Naive thymus-derived CD8-positive, alpha-beta T cell (primary cell): ENCODE measurements at regions of chr17 and their contacts with region 1.

Region 1: DNA sequence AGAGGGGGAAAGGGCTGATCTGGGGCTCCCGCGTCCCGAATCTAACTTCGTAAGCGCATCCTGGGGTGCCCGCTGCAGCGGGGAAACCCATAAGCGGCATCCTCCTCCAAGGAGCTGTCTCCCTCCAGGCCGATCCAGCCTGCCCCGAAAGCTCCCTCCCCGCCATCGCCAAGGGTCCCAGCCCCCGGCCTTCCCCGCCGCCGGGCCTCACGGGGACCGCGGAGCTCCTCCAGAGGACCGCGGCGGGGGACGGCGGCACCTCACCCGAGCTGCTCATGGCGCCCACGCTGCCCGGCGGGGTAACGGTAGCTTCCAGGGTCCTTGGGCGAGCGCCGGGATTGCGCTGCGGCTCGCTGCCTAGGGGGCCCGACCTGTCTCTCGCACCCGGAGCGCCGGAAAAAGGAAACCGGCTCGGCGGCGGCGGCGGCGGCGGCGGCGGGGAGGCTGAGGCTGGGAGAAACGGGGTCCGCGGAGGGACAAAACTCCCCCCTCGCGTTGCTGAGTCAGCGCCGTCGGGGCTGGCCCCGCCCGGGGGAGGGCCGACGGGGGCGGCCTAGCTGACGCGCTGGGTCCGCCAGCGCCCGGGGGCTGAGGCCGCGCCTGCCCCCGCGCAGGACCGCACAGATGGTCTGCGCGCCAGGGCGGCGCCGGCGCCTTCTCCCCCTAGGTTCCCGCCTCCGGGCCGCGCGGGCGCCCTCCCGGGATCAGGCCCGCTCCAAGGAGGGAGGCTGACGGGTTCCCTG is at the start of gene BLMH:
- DNase-seq: peak; percentile 65 to 85 (median 75)
- ATAC-seq: peak; percentile 78 to 89
- H3K4me3 Mint-ChIP-seq: peak within 1 kb of the TSS in 9 of 10 donors; percentile 90 to 97 (median 95)
- H3K27ac Mint-ChIP-seq: peak within 1 kb of the TSS; percentile 36 to 92 (median 87)
- H3K4me1 Mint-ChIP-seq: peaks cover 9 to 25% (median 19%) of the 10 kb centered on the region in 4 donors
- H3K27me3 Mint-ChIP-seq: no peaks in the 10 kb centered on the region
- polyA plus RNA-seq, gene BLMH: 17.6 to 28.3 (median 25.4) TPM

Region 2: DNA sequence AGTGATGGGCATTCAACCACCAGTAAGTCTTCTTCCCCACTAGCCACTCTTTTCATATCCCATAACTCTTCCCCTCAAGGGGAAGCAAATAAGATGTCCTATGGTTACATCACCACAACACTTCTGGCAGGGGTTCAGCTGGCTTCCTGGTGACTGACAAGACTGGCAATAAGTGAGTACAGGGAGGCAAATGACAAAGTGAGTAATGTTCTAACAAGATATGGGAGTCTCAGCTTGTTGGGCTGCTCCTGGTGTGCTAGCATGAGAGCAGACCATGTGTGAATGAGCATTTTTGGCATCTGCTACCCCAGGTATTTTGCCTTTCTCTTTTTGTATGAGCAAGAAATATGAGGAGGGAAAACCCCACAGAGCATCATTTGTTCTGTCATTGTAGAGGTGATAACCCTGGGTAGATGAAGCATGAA is 32.2 kb after region 1 on chr17:
- POLR2A ChIA-PET with region 1: interaction called, 17 read pairs
- DNase-seq: peak in 3 of 10 donors; percentile 7 to 13 (median 8)
- ATAC-seq: peak; percentile 54 to 56
- H3K4me3 Mint-ChIP-seq: peak overlapping the region in 9 of 10 donors; percentile 26 to 67 (median 55)
- H3K27ac Mint-ChIP-seq: peak overlapping the region; percentile 38 to 95 (median 90)
- H3K4me1 Mint-ChIP-seq: peaks cover 11 to 32% (median 22%) of the 10 kb centered on the region in 4 donors
- H3K27me3 Mint-ChIP-seq: peaks cover 0 to 1% (median 0%) of the 10 kb centered on the region in 5 donors

Region 3: GRCh38 chr17:30336369-30337171 is 44.9 kb after region 1 on chr17:
- POLR2A ChIA-PET with region 1: interaction called, 17 read pairs
- DNase-seq: peak; percentile 39 to 82 (median 58)
- ATAC-seq: peak; percentile 45 to 46
- H3K4me3 Mint-ChIP-seq: no peak overlapping the region
- H3K27ac Mint-ChIP-seq: peak overlapping the region in 1 of 10 donors; percentile 27
- H3K4me1 Mint-ChIP-seq: peaks cover 16 to 35% (median 33%) of the 10 kb centered on the region in 4 donors
- H3K27me3 Mint-ChIP-seq: no peaks in the 10 kb centered on the region

Region 4: DNA sequence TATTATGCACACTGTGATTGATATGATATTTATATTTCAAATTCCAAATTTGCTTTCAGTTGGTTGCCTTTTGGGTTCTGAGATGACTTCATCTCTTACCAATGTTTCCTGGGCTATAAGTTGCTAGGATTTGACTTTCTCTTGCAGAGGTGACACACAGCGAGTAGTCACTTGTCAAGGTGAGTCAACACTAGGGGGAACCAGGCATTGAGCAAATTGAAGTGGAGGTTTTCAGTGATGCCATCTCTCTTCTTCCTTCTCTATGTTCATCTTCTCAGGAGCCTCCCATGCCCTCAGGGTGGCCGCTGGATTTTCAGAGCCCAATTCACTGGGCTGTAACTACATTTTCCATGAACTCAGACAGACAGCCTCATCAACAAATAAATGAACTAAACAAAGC is 81.0 kb after region 1 on chr17:
- POLR2A ChIA-PET with region 1: no interaction called
- DNase-seq: no peak
- ATAC-seq: no peak
- H3K4me3 Mint-ChIP-seq: no peak overlapping the region
- H3K27ac Mint-ChIP-seq: peak overlapping the region in 1 of 10 donors; percentile 26
- H3K4me1 Mint-ChIP-seq: peaks cover 15 to 27% (median 25%) of the 10 kb centered on the region in 4 donors
- H3K27me3 Mint-ChIP-seq: peaks cover 0 to 4% (median 3%) of the 10 kb centered on the region in 5 donors